ENCODE measurements at regions of chr22 and their contacts with region 1.

Region 1: DNA sequence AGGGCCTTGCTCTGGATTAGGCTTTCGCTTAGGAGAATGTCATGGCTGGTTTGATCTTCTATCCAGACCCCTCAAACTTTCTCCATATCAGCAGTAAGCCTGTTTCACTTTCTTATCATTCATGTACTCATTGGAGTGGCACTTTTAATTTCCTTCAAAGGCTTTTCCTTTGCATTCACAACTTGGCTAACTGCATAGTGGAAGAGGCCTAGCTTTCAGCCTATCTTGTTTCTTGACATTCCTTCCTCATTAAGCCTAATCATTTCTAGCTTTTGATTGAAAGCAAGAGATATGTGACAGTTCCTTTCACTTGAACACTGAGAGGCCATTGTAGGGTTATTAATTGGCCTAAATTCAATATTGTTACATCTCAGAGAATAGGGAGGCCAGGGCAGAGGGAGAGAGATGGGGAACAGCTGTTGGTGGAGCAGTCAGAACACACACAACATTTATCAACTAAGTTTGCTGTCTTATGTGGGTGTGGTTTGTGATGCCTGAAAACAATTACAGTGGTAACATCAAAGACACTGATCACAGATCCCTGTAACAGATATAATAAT is 37.7 kb upstream of the APOBEC3A start:
- DNase-seq: no peak
- ATAC-seq: no peak
- H3K4me3 ChIP-seq: no peak overlapping the region
- H3K27ac ChIP-seq: no peak overlapping the region
- H3K4me1 ChIP-seq: peaks cover 9% of the 10 kb centered on the region
- H3K27me3 ChIP-seq: peaks cover 0 to 6% (median 0%) of the 10 kb centered on the region in 3 donors
- CTCF ChIP-seq: no peak

Region 2: GRCh38 chr22:38820020-38820419 is 99.7 kb before region 1 on chr22:
- intact Hi-C with region 1: no loop called
- DNase-seq: no peak
- ATAC-seq: no peak
- H3K4me3 ChIP-seq: no peak overlapping the region
- H3K27ac ChIP-seq: no peak overlapping the region
- H3K4me1 ChIP-seq: no peaks in the 10 kb centered on the region
- H3K27me3 ChIP-seq: peaks cover 0 to 2% (median 0%) of the 10 kb centered on the region in 3 donors
- CTCF ChIP-seq: no peak

Region 3: DNA sequence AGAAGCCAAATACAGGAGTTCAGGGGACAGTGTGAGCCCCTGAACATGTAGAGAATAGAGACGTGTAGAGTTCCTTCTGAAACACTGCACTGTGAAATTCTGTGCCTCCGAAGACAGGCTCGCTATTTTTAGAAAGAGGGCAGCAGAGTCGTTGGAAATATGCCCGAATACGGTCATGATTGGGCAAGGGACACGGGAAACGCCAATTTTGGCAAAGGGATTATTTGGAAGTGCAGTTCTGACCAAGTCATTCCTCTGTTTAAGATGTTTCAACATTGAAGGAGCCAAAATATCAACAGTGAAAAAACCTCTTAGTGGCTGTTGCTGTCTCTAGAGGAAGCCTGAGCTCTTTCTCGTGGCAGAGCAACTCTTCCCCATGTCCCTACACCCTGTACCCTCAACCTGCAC is 38.2 kb before region 1 on chr22:
- intact Hi-C with region 1: loop called (anchors 5 kb)
- DNase-seq: peak; percentile 54 to 68
- ATAC-seq: peak; percentile 75 to 92 (median 81)
- H3K4me3 ChIP-seq: peak overlapping the region; percentile 41
- H3K27ac ChIP-seq: peak overlapping the region; percentile 75
- H3K4me1 ChIP-seq: peaks cover 13% of the 10 kb centered on the region
- H3K27me3 ChIP-seq: no peaks in the 10 kb centered on the region
- CTCF ChIP-seq: no peak

Region 4: DNA sequence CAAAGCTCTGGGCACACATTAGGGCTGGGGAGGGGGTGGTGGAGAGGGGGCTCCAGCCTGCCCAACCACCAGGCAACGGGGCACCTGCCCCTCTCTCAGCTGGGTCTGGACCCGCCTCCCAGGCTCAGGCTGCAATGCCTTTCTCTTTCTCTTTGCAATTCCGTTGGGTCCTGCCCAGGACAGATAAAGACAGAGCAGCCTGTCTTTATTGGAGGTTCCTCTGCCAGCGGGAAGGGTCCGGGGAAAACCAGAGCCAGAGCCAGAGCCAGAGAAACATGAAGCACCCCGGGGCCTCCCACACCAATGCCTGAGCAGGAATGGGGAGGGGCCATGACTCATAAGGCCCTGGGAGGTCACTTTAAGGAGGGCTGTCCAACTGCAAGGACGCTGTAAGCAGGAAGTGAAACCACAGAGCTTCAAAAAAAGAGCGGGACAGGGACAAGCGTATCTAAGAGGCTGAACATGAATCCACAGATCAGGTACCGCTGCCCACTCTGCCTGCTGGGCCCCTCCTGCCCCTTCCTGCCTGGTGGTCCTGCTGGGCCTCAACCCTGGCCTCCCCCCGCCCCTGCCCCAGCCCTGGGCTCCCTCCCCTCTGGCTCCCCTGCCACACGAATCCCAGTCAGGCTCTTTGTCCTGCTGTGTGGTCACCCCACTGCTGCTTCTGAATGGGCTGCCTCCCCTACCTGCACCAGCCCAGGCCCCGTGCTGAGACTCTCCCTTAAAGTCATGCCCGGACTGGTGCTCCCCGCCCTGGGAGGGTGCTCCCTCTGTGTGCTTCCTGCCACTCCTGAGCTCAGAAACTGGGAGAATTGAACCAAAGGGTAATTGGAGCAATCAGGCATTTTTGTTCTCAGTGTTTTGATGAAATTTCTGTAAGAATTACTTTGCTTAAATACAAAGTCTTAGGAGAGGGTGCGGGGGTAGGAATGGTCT is 62.5 kb after region 1 on chr22 and contains the start of gene APOBEC3B:
- intact Hi-C with region 1: no loop called
- DNase-seq: peak; percentile 83 to 89
- ATAC-seq: peak; percentile 94 to 100 (median 98)
- H3K4me3 ChIP-seq: peak within 1 kb of the TSS; percentile 56
- H3K27ac ChIP-seq: no peak within 1 kb of the TSS
- H3K4me1 ChIP-seq: no peaks in the 10 kb centered on the region
- H3K27me3 ChIP-seq: no peaks in the 10 kb centered on the region
- CTCF ChIP-seq: no peak
- total RNA-seq, gene APOBEC3B: 0.30 to 0.59 TPM in 2 of 4 donors, not detected in the others